CD4-positive, alpha-beta T cell (primary cell): ENCODE measurements at regions of chr9 and their contacts with region 1.

Region 1: GRCh38 chr9:126704873-126705766 is 91.4 kb downstream of the LMX1B start:
- DNase-seq: peak; percentile 77 to 92 (median 82)
- ATAC-seq: peak; percentile 92
- H3K4me3 ChIP-seq: peak overlapping the region; percentile 30
- H3K4me3 Mint-ChIP-seq: peak overlapping the region; percentile 5
- H3K27ac ChIP-seq: no peak overlapping the region
- H3K27ac Mint-ChIP-seq: no peak overlapping the region
- H3K4me1 ChIP-seq: peaks cover 21% of the 10 kb centered on the region
- H3K4me1 Mint-ChIP-seq: peaks cover 21% of the 10 kb centered on the region
- H3K27me3 ChIP-seq: peaks cover 14 to 16% of the 10 kb centered on the region in 2 experiments
- H3K27me3 Mint-ChIP-seq: peaks cover 30% of the 10 kb centered on the region
- CTCF ChIP-seq: peak; percentile 95

Region 2: DNA sequence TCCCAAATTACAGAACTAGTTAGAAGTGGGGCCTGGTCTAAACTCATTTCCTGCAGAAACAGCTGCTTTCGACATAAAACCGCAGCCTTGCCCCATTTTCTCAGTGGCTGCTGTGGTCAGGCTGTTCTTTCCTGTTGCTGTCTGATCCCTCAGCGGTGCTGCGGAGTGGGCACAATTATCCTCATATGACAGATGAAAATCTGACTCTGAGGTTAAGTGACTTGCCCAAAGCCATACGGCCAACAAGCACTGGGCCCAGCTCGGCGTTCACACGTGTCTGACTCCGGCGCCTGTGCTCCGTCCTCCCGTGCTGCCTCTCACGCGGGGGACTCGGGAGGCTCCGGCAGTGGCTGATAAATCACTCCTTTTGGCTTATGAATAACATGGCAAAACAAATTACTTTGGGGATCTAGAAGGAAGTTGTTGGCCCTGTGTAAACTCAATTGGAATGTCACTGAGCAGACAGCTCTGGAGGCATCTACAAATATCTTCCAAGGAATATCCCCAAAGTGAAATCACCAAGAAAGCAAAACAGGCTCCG is 234.0 kb before region 1 on chr9:
- CTCF ChIA-PET with region 1: no interaction called
- POLR2A ChIA-PET with region 1: no interaction called
- intact Hi-C with region 1: no loop called
- DNase-seq: peak; percentile 53 to 92 (median 62)
- ATAC-seq: peak; percentile 73
- H3K4me3 ChIP-seq: peak overlapping the region; percentile 31
- H3K4me3 Mint-ChIP-seq: peak overlapping the region; percentile 81
- H3K27ac ChIP-seq: peak overlapping the region; percentile 42 to 56
- H3K27ac Mint-ChIP-seq: peak overlapping the region; percentile 95
- H3K4me1 ChIP-seq: peaks cover 82% of the 10 kb centered on the region
- H3K4me1 Mint-ChIP-seq: peaks cover 80% of the 10 kb centered on the region
- H3K27me3 ChIP-seq: no peaks in the 10 kb centered on the region
- H3K27me3 Mint-ChIP-seq: no peaks in the 10 kb centered on the region
- CTCF ChIP-seq: no peak

Region 3: GRCh38 chr9:126636983-126637798 is 67.9 kb before region 1 on chr9:
- CTCF ChIA-PET with region 1: no interaction called
- POLR2A ChIA-PET with region 1: no interaction called
- intact Hi-C with region 1: no loop called
- DNase-seq: peak in 5 of 14 experiments; percentile 5 to 81 (median 55)
- ATAC-seq: peak; percentile 57
- H3K4me3 ChIP-seq: no peak overlapping the region
- H3K4me3 Mint-ChIP-seq: no peak overlapping the region
- H3K27ac ChIP-seq: no peak overlapping the region
- H3K27ac Mint-ChIP-seq: no peak overlapping the region
- H3K4me1 ChIP-seq: peaks cover 8% of the 10 kb centered on the region
- H3K4me1 Mint-ChIP-seq: no peaks in the 10 kb centered on the region
- H3K27me3 ChIP-seq: peaks cover 23 to 66% of the 10 kb centered on the region in 2 experiments
- H3K27me3 Mint-ChIP-seq: peaks cover 76% of the 10 kb centered on the region
- CTCF ChIP-seq: no peak

Region 4: DNA sequence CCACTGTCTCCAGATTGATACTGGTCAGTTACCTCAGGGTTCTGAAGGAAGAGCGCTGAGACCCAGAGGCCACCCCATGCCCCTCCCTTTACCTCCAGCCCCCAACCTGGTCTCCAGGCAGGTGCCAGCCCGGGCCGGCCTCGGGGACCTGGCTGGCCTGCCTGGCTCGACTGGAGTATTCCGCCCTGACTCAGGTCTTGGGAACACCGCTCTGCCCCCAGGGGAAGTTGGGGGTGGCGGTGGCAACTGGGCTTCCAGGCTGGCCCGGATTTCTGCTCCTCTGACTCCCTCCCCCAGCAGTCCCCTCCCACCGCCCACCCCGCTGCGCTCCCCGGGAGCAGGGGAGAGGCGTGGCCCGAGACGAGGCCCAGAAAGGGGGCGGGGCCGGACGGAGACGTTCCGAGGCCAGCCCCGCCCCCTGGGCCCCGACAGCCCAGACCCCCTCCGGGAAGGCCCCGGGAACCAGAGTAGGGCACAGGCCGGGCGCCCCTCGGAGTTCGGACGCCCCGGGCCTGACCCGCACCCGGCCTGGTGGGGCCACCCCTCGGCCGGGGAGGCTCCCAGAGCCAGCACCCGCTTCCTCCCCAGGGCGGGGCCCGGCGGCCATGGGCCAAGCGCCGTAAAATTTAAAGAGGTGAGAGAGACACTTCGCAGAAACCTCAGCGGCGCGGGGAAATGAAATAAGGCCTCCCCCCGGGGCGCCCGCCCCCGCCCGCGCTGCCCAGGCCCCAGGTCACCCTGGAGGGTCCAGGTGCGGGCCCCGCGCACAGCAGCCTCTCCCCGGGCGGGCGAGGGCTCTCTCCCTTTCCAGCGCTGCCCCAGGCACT is 17.3 kb after region 1 on chr9:
- CTCF ChIA-PET with region 1: interaction called, 37 read pairs
- POLR2A ChIA-PET with region 1: interaction called, 32 read pairs
- intact Hi-C with region 1: loop called (anchors 2 kb)
- DNase-seq: peak; percentile 76 to 95 (median 88)
- ATAC-seq: peak; percentile 53
- H3K4me3 ChIP-seq: peak overlapping the region; percentile 86
- H3K4me3 Mint-ChIP-seq: peak overlapping the region; percentile 97
- H3K27ac ChIP-seq: peak overlapping the region; percentile 93 to 97
- H3K27ac Mint-ChIP-seq: peak overlapping the region; percentile 96
- H3K4me1 ChIP-seq: peaks cover 46% of the 10 kb centered on the region
- H3K4me1 Mint-ChIP-seq: peaks cover 50% of the 10 kb centered on the region
- H3K27me3 ChIP-seq: no peaks in the 10 kb centered on the region
- H3K27me3 Mint-ChIP-seq: no peaks in the 10 kb centered on the region
- CTCF ChIP-seq: no peak

Region 5: DNA sequence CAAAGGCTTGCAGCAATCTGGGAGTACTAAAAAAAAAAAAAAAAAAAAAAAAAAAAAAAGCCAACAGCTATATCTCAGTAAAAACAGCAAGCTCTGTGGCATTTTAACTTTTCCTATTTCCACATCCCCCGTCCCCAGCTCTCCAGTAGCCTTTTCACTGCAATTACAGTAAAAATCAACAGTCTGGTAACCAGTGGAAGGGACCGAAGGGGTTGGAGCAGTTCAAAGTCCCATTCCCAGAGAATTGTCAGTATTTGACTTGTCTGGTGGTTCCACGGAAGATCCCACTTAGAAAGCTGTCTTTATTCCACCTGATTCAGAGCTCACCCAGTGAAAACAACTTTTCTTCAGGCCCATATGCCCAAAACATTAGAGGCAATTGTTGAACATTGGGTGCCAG is 27.9 kb after region 1 on chr9:
- CTCF ChIA-PET with region 1: interaction called, 12 read pairs
- POLR2A ChIA-PET with region 1: no interaction called
- intact Hi-C with region 1: no loop called
- DNase-seq: no peak
- ATAC-seq: no peak
- H3K4me3 ChIP-seq: no peak overlapping the region
- H3K4me3 Mint-ChIP-seq: no peak overlapping the region
- H3K27ac ChIP-seq: no peak overlapping the region
- H3K27ac Mint-ChIP-seq: no peak overlapping the region
- H3K4me1 ChIP-seq: no peaks in the 10 kb centered on the region
- H3K4me1 Mint-ChIP-seq: no peaks in the 10 kb centered on the region
- H3K27me3 ChIP-seq: peaks cover 0 to 4% of the 10 kb centered on the region in 2 experiments
- H3K27me3 Mint-ChIP-seq: no peaks in the 10 kb centered on the region
- CTCF ChIP-seq: no peak

Region 6: DNA sequence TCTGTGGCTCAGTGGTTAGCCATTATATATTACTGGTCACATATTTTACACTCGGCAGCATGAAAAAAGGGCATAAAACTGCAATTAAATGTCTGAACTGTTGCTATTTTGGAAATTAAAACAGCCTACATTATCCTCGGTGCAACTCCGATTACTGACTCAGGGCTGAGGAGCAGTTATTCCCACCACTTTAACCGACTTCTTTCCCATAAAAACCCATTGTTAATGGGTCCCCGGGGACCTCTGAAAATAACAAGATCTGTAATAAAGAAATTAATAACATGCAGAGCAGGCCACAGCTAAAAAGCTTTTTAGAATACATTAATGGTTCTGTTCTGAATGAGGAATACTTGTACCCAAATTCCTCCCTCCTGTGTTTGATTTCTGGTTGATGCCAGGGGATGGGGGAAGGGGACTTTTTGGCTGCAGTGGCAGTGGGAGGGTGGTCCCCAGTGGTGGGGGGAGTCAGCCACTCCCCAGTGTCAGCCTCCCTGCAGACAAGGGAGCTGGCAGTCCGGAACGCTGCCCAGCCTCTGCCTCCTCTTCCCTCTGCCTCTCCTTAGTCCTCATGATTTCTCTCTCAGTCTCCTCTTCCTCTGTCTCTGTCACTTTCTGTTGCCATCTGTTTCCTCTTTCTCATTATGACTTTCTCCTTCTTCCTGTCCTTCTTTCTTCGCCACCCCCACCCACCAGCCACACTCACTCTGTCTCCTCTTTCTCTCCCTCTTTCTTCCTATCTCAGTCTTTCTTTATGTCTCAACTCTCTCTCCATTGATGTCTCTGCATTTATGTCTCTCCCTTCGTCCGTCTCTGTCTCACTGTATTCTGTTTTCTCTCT is 40.7 kb after region 1 on chr9:
- CTCF ChIA-PET with region 1: interaction called, 13 read pairs
- POLR2A ChIA-PET with region 1: interaction called, 4 read pairs
- intact Hi-C with region 1: no loop called
- DNase-seq: no peak
- ATAC-seq: no peak
- H3K4me3 ChIP-seq: no peak overlapping the region
- H3K4me3 Mint-ChIP-seq: no peak overlapping the region
- H3K27ac ChIP-seq: no peak overlapping the region
- H3K27ac Mint-ChIP-seq: no peak overlapping the region
- H3K4me1 ChIP-seq: peaks cover 9% of the 10 kb centered on the region
- H3K4me1 Mint-ChIP-seq: peaks cover 22% of the 10 kb centered on the region
- H3K27me3 ChIP-seq: peaks cover 0 to 2% of the 10 kb centered on the region in 2 experiments
- H3K27me3 Mint-ChIP-seq: no peaks in the 10 kb centered on the region
- CTCF ChIP-seq: no peak

Region 7: GRCh38 chr9:126773004-126773607 is 68.0 kb after region 1 on chr9:
- CTCF ChIA-PET with region 1: interaction called, 157 read pairs
- POLR2A ChIA-PET with region 1: no interaction called
- intact Hi-C with region 1: no loop called
- DNase-seq: peak in 2 of 14 experiments; percentile 21 to 33
- ATAC-seq: no peak
- H3K4me3 ChIP-seq: no peak overlapping the region
- H3K4me3 Mint-ChIP-seq: no peak overlapping the region
- H3K27ac ChIP-seq: no peak overlapping the region
- H3K27ac Mint-ChIP-seq: no peak overlapping the region
- H3K4me1 ChIP-seq: no peaks in the 10 kb centered on the region
- H3K4me1 Mint-ChIP-seq: no peaks in the 10 kb centered on the region
- H3K27me3 ChIP-seq: peaks cover 5 to 6% of the 10 kb centered on the region in 2 experiments
- H3K27me3 Mint-ChIP-seq: peaks cover 25% of the 10 kb centered on the region
- CTCF ChIP-seq: peak; percentile 38

Region 8: DNA sequence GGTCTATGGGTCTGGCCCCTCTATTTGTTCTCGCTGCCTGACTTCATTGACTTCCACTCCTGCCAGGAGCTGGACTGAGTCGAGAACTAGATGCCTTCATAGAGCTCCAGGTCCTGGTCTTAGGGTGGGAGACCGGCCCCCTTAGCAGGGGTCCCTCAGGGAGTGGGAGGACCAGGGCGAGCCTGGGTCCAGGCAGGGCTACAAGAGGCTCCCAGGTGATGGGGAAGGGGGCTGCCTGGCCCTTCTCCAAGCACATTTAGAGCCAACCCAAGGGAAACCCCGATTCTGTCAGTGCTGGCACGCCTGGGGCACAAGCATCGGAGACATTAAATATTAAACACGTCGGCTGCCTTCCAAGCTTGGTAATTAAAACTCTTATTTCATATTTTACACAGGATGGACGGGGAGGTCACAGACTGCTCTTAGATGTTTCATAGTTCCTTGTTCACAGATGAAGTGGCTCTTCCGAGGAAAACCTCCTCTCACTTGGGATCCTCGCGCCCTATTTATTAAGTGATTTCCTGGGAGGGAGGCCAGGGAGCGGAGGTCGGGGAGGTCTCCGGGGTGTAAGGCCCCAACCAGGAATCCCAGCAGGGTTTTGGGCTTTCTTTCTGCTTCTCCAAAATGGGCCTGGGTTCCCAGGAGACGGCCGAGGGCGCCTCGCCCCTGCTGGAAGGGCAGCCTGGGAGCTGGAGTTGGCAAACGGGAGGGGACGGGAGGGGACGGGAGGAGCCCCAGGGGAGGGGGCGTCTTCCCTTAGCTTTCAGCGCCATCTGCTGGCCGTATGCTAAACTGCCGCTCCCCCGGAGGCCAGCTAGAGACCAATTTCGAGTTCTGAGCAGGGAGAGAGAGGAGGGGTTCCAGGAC is 76.3 kb after region 1 on chr9:
- CTCF ChIA-PET with region 1: interaction called, 157 read pairs
- POLR2A ChIA-PET with region 1: interaction called, 16 read pairs
- intact Hi-C with region 1: loop called (anchors 1 kb)
- DNase-seq: peak; percentile 63 to 91 (median 82)
- ATAC-seq: peak; percentile 92
- H3K4me3 ChIP-seq: no peak overlapping the region
- H3K4me3 Mint-ChIP-seq: no peak overlapping the region
- H3K27ac ChIP-seq: no peak overlapping the region
- H3K27ac Mint-ChIP-seq: no peak overlapping the region
- H3K4me1 ChIP-seq: peaks cover 3% of the 10 kb centered on the region
- H3K4me1 Mint-ChIP-seq: no peaks in the 10 kb centered on the region
- H3K27me3 ChIP-seq: peaks cover 8 to 10% of the 10 kb centered on the region in 2 experiments
- H3K27me3 Mint-ChIP-seq: peaks cover 29% of the 10 kb centered on the region
- CTCF ChIP-seq: peak; percentile 98

Region 9: GRCh38 chr9:126804696-126805545 is 99.8 kb after region 1 on chr9 and contains the start of gene ZBTB43:
- CTCF ChIA-PET with region 1: interaction called, 13 read pairs
- POLR2A ChIA-PET with region 1: no interaction called
- intact Hi-C with region 1: no loop called
- DNase-seq: peak; percentile 97 to 99 (median 98)
- ATAC-seq: peak; percentile 85
- H3K4me3 ChIP-seq: peak within 1 kb of the TSS; percentile 75
- H3K4me3 Mint-ChIP-seq: peak within 1 kb of the TSS; percentile 99
- H3K27ac ChIP-seq: peak within 1 kb of the TSS; percentile 79 to 88
- H3K27ac Mint-ChIP-seq: peak within 1 kb of the TSS; percentile 96
- H3K4me1 ChIP-seq: peaks cover 19% of the 10 kb centered on the region
- H3K4me1 Mint-ChIP-seq: peaks cover 49% of the 10 kb centered on the region
- H3K27me3 ChIP-seq: no peaks in the 10 kb centered on the region
- H3K27me3 Mint-ChIP-seq: no peaks in the 10 kb centered on the region
- CTCF ChIP-seq: no peak
- total RNA-seq, gene ZBTB43: 47.7 to 50.8 TPM

Region 10: GRCh38 chr9:126844085-126844484 is 139.0 kb after region 1 on chr9:
- CTCF ChIA-PET with region 1: no interaction called
- POLR2A ChIA-PET with region 1: no interaction called
- intact Hi-C with region 1: no loop called
- DNase-seq: no peak
- ATAC-seq: no peak
- H3K4me3 ChIP-seq: no peak overlapping the region
- H3K4me3 Mint-ChIP-seq: no peak overlapping the region
- H3K27ac ChIP-seq: no peak overlapping the region
- H3K27ac Mint-ChIP-seq: no peak overlapping the region
- H3K4me1 ChIP-seq: no peaks in the 10 kb centered on the region
- H3K4me1 Mint-ChIP-seq: no peaks in the 10 kb centered on the region
- H3K27me3 ChIP-seq: no peaks in the 10 kb centered on the region
- H3K27me3 Mint-ChIP-seq: peaks cover 17% of the 10 kb centered on the region
- CTCF ChIP-seq: no peak